BJ (cell line): ENCODE measurements at regions of chr22 and their contacts with region 1.

Region 1: DNA sequence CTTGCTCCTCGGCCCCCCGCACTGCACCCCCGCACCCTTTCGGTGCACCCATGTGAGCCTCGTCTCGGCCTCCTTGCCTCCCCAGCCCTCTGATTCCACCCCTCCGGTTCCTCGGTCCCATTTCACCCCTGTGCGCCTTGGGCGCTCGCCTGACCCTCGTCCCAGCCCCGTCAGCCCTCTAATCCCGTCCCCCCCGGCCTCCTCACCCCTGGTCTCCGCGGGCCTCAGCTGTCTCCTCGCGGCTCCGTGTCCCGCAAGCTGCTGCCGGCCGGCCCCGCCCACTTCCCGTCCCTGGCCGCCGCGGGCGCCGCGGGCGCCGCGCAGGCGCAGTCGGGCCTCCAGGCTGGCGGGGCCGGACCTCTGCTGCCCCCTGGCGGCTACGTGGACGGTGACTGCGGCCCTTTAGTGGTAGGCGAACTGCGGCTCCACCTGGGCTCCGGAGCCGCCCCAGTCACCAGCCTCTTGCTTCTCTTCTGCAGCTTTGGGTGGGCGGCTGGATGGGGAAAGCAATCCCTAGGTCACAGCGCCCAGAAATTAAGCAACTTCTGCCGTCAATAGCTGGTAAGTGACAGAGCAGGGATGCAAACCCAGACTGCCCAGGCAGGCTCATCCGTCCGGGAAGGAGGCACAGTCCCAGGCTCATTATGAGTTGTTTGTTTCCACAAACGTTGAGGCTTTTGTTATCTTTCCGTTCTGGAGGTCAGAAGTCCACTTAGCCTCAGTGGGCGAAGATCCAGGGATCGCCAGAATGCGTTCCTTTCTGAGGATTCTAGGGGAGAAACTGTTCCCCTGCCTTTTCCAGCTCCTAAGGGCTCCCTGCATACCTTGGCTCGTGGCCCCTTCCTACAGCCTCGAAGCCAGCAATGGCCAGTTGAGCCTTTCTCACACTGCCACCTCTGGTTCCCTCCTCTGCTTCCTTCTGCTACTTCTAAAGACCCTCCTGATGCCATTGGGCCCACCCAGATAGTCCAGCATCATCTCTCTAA is at the start of gene PPM1F:
- DNase-seq: peak; percentile 9
- H3K4me3 ChIP-seq: peak within 1 kb of the TSS; percentile 97
- H3K27me3 ChIP-seq: no peaks in the 10 kb centered on the region
- CTCF ChIP-seq: peak; percentile 74
- polyA plus RNA-seq, gene PPM1F: 20.1 and 25.3 TPM in 2 replicates

Region 2: DNA sequence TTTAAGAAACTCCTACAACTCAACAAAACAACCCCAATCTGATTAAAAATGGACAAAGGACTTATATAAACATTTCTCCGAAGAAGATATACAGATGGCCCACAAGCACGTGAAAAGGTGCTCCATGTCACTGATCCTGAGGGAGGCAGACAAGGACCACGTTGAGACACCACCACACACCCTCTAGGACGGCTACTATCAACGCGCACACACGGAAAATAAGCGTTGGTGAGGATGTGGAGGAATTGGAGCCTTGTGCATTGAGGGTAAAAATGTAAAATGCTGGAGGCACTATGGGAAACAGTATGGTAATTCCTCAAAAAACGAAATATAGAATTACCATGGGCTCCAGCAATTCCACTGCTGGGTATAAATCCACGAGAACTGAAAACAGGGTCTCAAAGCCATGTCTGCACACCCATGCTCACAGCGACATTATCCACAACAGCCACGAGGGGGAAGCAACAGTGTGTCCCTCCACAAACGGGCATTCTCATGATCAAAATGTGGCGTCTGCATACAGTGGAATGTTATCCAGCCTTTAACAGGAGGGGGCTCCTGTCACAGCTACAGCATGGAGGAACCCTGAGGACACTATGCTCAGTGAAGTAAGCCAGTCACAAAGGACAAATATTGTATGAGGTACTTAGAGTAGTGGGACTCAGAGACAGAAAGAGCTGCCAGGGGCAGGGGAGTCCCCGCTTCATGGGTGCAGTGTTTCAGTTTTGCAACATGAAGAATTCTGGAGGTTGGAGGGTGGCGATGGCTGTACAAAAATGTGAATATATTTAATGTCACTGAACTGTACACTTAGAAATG is 239.8 kb before region 1 on chr22:
- CTCF ChIA-PET with region 1: interaction called, 43 read pairs
- POLR2A ChIA-PET with region 1: no interaction called
- DNase-seq: peak; percentile 15
- H3K4me3 ChIP-seq: no peak overlapping the region
- H3K27me3 ChIP-seq: no peaks in the 10 kb centered on the region
- CTCF ChIP-seq: peak; percentile 85

Region 3: GRCh38 chr22:21719024-21719423 is 233.9 kb before region 1 on chr22:
- CTCF ChIA-PET with region 1: interaction called, 43 read pairs
- POLR2A ChIA-PET with region 1: no interaction called
- DNase-seq: no peak
- H3K4me3 ChIP-seq: no peak overlapping the region
- H3K27me3 ChIP-seq: no peaks in the 10 kb centered on the region
- CTCF ChIP-seq: no peak

Region 4: DNA sequence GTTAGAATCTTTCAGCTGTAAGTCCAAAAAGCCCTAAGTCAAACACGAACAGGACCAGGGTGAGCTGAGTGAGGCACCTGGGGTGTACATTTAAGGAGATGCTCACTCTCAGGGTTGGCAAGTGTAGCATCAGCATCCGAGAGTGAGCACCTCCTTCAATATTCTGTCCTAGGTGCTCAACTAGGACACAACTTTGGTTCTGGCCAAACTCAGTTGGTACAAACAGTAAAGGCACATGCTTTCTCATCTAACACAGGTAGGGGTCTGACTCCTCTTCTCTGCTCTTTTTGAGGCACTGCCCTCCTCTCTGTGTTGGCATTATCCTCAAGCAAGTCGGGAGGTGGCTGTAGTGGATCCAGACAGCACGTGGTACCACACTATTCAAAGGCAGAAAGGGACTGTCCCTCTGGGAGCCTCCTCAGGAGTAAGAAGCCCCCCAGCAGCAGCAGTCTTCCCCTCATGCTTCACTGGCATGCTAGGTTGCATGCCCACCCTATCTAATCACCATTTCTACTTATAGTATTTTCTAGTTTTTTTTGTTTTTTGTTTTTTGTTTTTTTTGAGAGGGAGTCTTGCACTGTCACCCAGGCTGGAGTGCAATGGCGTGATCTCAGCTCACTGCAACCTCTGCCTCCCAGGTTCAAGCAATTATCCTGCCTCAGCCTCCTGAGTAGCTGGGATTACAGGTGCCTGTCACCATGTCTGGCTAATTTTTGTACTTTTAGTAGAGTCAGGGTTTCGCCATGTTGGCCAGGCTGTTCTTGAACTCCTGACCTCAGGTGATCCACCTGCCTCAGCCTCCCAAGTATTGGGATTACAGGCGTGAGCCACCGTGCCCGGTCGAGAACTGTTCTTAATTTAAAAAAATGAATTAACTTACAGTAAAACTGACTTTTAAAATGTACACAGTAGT is 70.8 kb before region 1 on chr22:
- CTCF ChIA-PET with region 1: no interaction called
- POLR2A ChIA-PET with region 1: no interaction called
- DNase-seq: no peak
- H3K4me3 ChIP-seq: no peak overlapping the region
- H3K27me3 ChIP-seq: no peaks in the 10 kb centered on the region
- CTCF ChIP-seq: no peak

Region 5: DNA sequence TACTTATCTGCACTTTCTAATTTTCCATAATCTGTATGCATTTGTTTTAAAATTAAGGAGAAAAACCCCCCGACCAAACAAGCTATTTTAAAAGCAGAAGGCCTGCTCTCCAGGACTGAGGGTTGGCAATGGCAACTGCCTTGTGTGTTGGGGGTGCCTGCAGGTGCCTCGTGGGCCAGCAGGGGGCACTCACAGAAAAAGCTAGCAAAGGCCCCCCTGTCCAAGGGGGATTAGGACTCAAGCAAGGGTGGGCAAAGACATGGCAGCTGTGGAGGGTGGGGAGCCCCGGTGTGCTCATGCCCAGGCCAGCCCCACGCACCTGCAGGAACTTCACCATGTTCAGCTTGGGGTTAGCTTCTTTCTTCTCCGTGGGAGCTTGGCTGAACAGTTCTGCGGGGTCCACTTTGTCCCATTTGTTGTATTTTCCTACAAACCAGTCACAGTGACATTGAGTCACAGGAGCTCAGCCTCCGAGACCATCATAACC is 19.5 kb after region 1 on chr22:
- CTCF ChIA-PET with region 1: interaction called, 37 read pairs
- POLR2A ChIA-PET with region 1: no interaction called
- DNase-seq: no peak
- H3K4me3 ChIP-seq: no peak overlapping the region
- H3K27me3 ChIP-seq: no peaks in the 10 kb centered on the region
- CTCF ChIP-seq: peak; percentile 91

Region 6: DNA sequence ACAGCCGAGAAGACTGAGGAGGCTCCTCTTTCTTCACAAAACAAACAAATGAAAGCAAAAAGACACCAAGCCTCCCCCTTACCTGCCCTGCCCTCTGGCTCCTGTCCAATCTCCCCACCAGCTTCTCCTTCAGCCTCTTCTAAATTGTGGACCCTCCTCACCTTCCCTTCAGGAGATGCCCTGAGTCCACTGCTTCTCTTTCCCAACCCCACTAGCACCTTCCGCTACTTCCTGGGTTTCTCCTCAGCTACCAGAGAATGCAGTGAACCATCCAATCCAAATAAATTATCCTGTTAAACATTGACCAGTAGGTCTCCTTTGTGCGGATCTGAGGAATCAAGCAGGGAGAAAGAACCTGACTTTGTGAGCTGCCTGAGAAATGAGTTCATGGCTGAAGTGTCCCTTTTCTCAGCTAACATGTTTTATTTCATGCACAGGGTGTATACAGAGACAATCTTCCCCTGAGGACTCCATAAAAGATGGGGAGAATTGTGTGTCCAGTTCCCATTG is 228.5 kb after region 1 on chr22:
- CTCF ChIA-PET with region 1: no interaction called
- POLR2A ChIA-PET with region 1: no interaction called
- DNase-seq: no peak
- H3K4me3 ChIP-seq: no peak overlapping the region
- H3K27me3 ChIP-seq: peaks cover 6% of the 10 kb centered on the region; the same call in 1 of the 2 replicates
- CTCF ChIP-seq: no peak

Region 7: GRCh38 chr22:22226448-22227187 is 273.7 kb after region 1 on chr22:
- CTCF ChIA-PET with region 1: no interaction called
- POLR2A ChIA-PET with region 1: no interaction called
- DNase-seq: no peak
- H3K4me3 ChIP-seq: no peak overlapping the region
- H3K27me3 ChIP-seq: peaks cover 2% of the 10 kb centered on the region
- CTCF ChIP-seq: no peak